Dorsolateral prefrontal cortex (tissue), 120 donors: ENCODE measurements at regions of chr14 and their contacts with region 1.

Region 1: DNA sequence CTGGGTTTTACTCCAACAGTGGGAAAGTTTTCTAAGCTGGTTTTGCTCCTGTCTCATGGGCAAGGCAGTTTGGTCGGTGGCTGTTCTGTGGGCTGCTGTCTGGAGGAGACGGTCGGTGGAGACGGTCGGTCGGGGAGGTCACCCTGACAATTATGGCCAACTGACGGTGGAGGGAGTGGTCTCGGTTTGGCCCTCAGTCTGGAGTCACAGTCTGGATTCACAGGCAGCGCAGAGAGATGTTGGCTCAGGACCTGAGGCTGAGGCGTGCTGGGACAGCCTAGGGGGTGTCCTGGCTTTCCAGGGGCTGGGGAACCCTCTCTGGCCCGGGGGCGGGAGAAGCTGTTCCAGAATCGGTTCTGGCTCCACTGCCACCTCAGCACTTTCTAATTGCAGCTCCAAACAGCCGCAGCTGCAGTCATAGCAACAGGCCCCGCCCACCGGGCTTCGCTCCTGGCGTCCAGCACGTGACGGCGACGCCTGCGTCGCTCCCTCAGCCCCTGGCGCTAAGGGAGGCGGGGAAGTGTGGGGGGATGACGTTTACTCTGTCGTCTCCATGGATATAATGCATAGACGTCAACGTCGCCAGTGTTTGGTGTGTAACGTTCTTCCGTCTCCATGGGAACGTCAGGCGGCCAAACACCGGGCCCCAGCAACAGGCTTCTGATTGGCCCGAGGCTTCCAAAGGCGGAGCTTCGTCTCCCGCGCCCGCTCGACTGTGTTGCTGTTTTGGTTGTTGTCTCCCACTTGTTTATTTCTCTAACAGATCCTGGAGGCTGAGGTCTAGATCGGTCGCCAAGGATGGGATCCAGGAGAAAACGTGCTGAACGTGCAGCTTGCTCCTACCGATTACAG is 19.8 kb upstream of the FOS start:
- DNase-seq: peak; percentile 97 to 99 (median 98)
- H3K4me3 ChIP-seq: peak overlapping the region; percentile 35 to 78 (median 60)
- H3K27ac ChIP-seq: peak overlapping the region; percentile 68 to 100 (median 96)
- H3K27me3 ChIP-seq: no peaks in the 10 kb centered on the region
- CTCF ChIP-seq: peak in 7 of 56 donors; percentile 5 to 23 (median 17)

Region 2: GRCh38 chr14:75132382-75133086 is 126.3 kb before region 1 on chr14:
- intact Hi-C with region 1: loop called in 1 of 2 experiments (anchors 5 kb)
- DNase-seq: peak in 2 of 10 donors; percentile 44 to 59
- H3K4me3 ChIP-seq: peak overlapping the region in 1 of 59 donors; percentile 1
- H3K27ac ChIP-seq: peak overlapping the region in 56 of 59 donors; percentile 3 to 86 (median 67)
- H3K27me3 ChIP-seq: no peaks in the 10 kb centered on the region
- CTCF ChIP-seq: peak; percentile 62 to 94 (median 86)

Region 3: GRCh38 chr14:75236901-75237419 is 21.9 kb before region 1 on chr14:
- intact Hi-C with region 1: loop called in 1 of 2 experiments (anchors 1 kb)
- DNase-seq: peak in 1 of 10 donors; percentile 26
- H3K4me3 ChIP-seq: peak overlapping the region in 17 of 59 donors; percentile 1 to 36 (median 21)
- H3K27ac ChIP-seq: peak overlapping the region; percentile 14 to 95 (median 84)
- H3K27me3 ChIP-seq: no peaks in the 10 kb centered on the region
- CTCF ChIP-seq: no peak

Region 4: DNA sequence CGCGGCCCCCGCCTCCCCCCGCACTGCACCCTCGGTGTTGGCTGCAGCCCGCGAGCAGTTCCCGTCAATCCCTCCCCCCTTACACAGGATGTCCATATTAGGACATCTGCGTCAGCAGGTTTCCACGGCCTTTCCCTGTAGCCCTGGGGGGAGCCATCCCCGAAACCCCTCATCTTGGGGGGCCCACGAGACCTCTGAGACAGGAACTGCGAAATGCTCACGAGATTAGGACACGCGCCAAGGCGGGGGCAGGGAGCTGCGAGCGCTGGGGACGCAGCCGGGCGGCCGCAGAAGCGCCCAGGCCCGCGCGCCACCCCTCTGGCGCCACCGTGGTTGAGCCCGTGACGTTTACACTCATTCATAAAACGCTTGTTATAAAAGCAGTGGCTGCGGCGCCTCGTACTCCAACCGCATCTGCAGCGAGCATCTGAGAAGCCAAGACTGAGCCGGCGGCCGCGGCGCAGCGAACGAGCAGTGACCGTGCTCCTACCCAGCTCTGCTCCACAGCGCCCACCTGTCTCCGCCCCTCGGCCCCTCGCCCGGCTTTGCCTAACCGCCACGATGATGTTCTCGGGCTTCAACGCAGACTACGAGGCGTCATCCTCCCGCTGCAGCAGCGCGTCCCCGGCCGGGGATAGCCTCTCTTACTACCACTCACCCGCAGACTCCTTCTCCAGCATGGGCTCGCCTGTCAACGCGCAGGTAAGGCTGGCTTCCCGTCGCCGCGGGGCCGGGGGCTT is 19.8 kb after region 1 on chr14 and contains the start of gene FOS:
- intact Hi-C with region 1: loop called (anchors 1 kb)
- DNase-seq: peak; percentile 82 to 96 (median 94)
- H3K4me3 ChIP-seq: peak within 1 kb of the TSS; percentile 63 to 97 (median 85)
- H3K27ac ChIP-seq: peak within 1 kb of the TSS; percentile 77 to 100 (median 99)
- H3K27me3 ChIP-seq: no peaks in the 10 kb centered on the region
- CTCF ChIP-seq: peak in 4 of 56 donors; percentile 5 to 23 (median 16)
- total RNA-seq, gene FOS: 7.4 to 738 (median 68.8) TPM

Region 5: DNA sequence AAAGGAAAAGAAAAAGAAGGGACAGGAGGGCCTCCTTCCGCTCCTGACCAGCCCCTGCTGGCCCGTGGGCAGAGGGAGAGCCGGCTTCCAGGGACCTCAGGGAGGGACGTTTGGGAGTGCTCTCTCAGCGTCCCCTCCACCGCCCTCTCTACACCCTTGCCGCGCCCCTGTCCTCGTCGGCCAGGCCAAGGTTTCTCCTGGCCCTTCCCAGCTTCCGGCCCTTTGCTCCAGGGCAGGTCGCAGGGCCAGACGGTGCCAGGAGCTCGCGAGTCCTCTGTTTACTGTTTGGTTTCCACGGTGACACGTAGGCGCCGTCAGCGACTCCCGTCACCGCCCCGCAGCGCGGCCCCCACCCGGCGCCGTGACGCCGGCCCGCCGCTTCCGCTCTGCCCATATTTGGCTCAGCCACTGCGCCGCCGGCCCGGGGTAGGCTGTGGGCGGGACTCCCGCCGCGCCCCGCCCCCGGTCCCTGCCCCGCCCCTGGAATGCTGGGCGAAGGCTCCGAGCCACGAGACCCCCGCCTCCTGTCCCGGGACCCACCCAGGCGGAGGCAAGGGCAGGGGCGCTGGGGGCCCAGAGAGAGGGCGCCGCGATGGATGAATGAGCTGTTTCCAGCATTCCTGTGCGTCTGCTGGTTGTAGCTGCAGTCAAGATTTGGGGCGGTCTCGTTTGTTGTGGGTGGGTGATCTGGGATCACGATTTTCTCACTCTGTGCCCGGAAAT is 35.2 kb after region 1 on chr14:
- intact Hi-C with region 1: loop called in 1 of 2 experiments (anchors 2 kb)
- DNase-seq: peak; percentile 84 to 98 (median 92)
- H3K4me3 ChIP-seq: peak overlapping the region; percentile 57 to 94 (median 77)
- H3K27ac ChIP-seq: peak overlapping the region; percentile 57 to 99 (median 93)
- H3K27me3 ChIP-seq: no peaks in the 10 kb centered on the region
- CTCF ChIP-seq: peak in 16 of 56 donors; percentile 1 to 29 (median 16)